ENCODE measurements at regions of chr18 and their contacts with region 1.

Region 1: GRCh38 chr18:80157708-80158343 is 48.8 kb downstream of the ADNP2 start:
- DNase-seq: peak; percentile 88
- ATAC-seq: peak; percentile 70
- H3K4me3 Mint-ChIP-seq: no peak overlapping the region
- H3K27ac Mint-ChIP-seq: no peak overlapping the region
- H3K4me1 Mint-ChIP-seq: peaks cover 5% of the 10 kb centered on the region
- H3K27me3 Mint-ChIP-seq: peaks cover 9% of the 10 kb centered on the region
- CTCF ChIP-seq: peak; percentile 98

Region 2: DNA sequence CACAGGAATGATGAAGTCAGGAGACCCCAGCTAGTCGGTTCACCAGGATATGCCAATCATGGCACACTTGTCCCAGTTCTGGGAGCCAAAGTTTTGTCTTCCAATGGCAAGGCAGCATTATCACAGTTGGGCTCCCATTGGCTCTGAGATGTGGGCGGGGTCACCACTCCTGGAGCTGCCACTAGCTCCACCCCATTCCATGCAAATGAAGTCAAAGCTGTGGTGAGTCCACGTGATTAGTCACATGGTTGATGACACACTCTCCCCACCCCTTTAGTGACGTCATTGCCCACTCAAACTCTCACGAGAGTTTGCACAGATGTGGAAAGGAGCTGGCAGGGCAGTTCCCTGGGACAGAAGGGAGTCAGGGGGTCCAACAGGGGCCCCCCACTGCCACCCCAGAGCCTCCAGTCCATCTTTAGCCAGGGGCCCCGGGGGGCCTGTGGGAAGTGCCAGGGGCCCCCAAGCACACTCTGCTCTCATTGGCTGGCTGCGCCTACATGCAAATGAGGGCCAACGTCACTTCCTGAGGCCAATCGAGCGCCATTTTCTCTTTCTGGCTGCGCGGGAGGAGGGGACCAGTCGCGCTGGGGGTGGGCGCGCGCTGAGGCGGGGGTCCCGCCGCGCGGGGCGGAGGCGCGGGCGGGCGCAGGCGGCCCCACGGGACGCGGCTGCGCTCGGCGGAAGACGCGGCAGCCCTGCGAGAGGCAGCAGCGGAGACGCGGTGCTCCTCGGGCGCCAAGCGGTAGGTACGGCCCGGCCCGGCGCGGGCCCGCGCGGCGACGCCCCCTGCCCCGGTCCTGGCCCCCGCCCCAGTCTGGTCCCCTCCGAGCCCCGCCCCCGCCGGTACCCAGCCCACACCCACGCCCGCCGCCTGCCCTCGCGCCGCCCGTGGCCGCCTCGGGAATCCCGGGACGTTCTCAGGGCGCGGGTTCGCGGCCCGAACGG is 48.8 kb before region 1 on chr18 and contains the start of gene ADNP2:
- CTCF ChIA-PET with region 1: interaction called, 22 read pairs
- POLR2A ChIA-PET with region 1: no interaction called
- intact Hi-C with region 1: no loop called
- DNase-seq: peak; percentile 94
- ATAC-seq: peak; percentile 84
- H3K4me3 Mint-ChIP-seq: peak within 1 kb of the TSS; percentile 85
- H3K27ac Mint-ChIP-seq: peak within 1 kb of the TSS; percentile 90
- H3K4me1 Mint-ChIP-seq: peaks cover 47% of the 10 kb centered on the region
- H3K27me3 Mint-ChIP-seq: no peaks in the 10 kb centered on the region
- CTCF ChIP-seq: no peak
- total RNA-seq, gene ADNP2: 22.1 to 22.5 TPM

Region 3: GRCh38 chr18:80171054-80171872 is 13.4 kb after region 1 on chr18:
- CTCF ChIA-PET with region 1: interaction called, 61 read pairs
- POLR2A ChIA-PET with region 1: no interaction called
- intact Hi-C with region 1: no loop called
- DNase-seq: peak; percentile 73
- ATAC-seq: no peak
- H3K4me3 Mint-ChIP-seq: no peak overlapping the region
- H3K27ac Mint-ChIP-seq: no peak overlapping the region
- H3K4me1 Mint-ChIP-seq: peaks cover 22% of the 10 kb centered on the region
- H3K27me3 Mint-ChIP-seq: peaks cover 20% of the 10 kb centered on the region
- CTCF ChIP-seq: peak; percentile 98

Region 4: GRCh38 chr18:80183273-80184050 is 25.6 kb after region 1 on chr18:
- CTCF ChIA-PET with region 1: interaction called, 13 read pairs
- POLR2A ChIA-PET with region 1: no interaction called
- intact Hi-C with region 1: no loop called
- DNase-seq: no peak
- ATAC-seq: no peak
- H3K4me3 Mint-ChIP-seq: no peak overlapping the region
- H3K27ac Mint-ChIP-seq: no peak overlapping the region
- H3K4me1 Mint-ChIP-seq: no peaks in the 10 kb centered on the region
- H3K27me3 Mint-ChIP-seq: no peaks in the 10 kb centered on the region
- CTCF ChIP-seq: no peak

Region 5: GRCh38 chr18:80238651-80239260 is 80.9 kb after region 1 on chr18:
- CTCF ChIA-PET with region 1: interaction called, 11 read pairs
- POLR2A ChIA-PET with region 1: interaction called, 3 read pairs
- intact Hi-C with region 1: no loop called
- DNase-seq: no peak
- ATAC-seq: no peak
- H3K4me3 Mint-ChIP-seq: no peak overlapping the region
- H3K27ac Mint-ChIP-seq: no peak overlapping the region
- H3K4me1 Mint-ChIP-seq: no peaks in the 10 kb centered on the region
- H3K27me3 Mint-ChIP-seq: peaks cover 28% of the 10 kb centered on the region
- CTCF ChIP-seq: no peak